Endothelial cell of umbilical vein (primary cell): ENCODE measurements at regions of chr5 and their contacts with region 1.

Region 1: GRCh38 chr5:125484742-125485641 is 738.6 kb upstream of the ZNF608 start:
- DNase-seq: peak; percentile 96
- H3K4me3 ChIP-seq: peak overlapping the region in 1 of 3 experiments; percentile 28
- H3K27ac ChIP-seq: peak overlapping the region; percentile 99
- H3K4me1 ChIP-seq: peaks cover 36% of the 10 kb centered on the region
- H3K27me3 ChIP-seq: no peaks in the 10 kb centered on the region
- CTCF ChIP-seq: no peak
- POLR2A ChIP-seq: peak; percentile 72

Region 2: GRCh38 chr5:123708074-123708806 is 1776.8 kb before region 1 on chr5:
- CTCF ChIA-PET with region 1: no interaction called
- POLR2A ChIA-PET with region 1: no interaction called
- dilution Hi-C with region 1: no loop called
- intact Hi-C with region 1: loop called (anchors 5 kb)
- DNase-seq: peak; percentile 77
- H3K4me3 ChIP-seq: no peak overlapping the region
- H3K27ac ChIP-seq: peak overlapping the region; percentile 64
- H3K4me1 ChIP-seq: peaks cover 23% of the 10 kb centered on the region
- H3K27me3 ChIP-seq: no peaks in the 10 kb centered on the region
- CTCF ChIP-seq: no peak
- POLR2A ChIP-seq: no peak

Region 3: GRCh38 chr5:124902097-124902821 is 582.7 kb before region 1 on chr5:
- CTCF ChIA-PET with region 1: no interaction called
- POLR2A ChIA-PET with region 1: no interaction called
- dilution Hi-C with region 1: no loop called
- intact Hi-C with region 1: loop called (anchors 5 kb)
- DNase-seq: peak; percentile 30
- H3K4me3 ChIP-seq: no peak overlapping the region
- H3K27ac ChIP-seq: no peak overlapping the region
- H3K4me1 ChIP-seq: peaks cover 16% of the 10 kb centered on the region
- H3K27me3 ChIP-seq: no peaks in the 10 kb centered on the region
- CTCF ChIP-seq: no peak
- POLR2A ChIP-seq: no peak

Region 4: GRCh38 chr5:125262782-125263181 is 222.2 kb before region 1 on chr5:
- CTCF ChIA-PET with region 1: no interaction called
- POLR2A ChIA-PET with region 1: no interaction called
- dilution Hi-C with region 1: no loop called
- intact Hi-C with region 1: loop called (anchors 2 kb)
- DNase-seq: peak; percentile 83
- H3K4me3 ChIP-seq: no peak overlapping the region
- H3K27ac ChIP-seq: peak overlapping the region; percentile 81
- H3K4me1 ChIP-seq: peaks cover 22% of the 10 kb centered on the region
- H3K27me3 ChIP-seq: no peaks in the 10 kb centered on the region
- CTCF ChIP-seq: no peak
- POLR2A ChIP-seq: no peak

Region 5: GRCh38 chr5:125326150-125326510 is 158.9 kb before region 1 on chr5:
- CTCF ChIA-PET with region 1: no interaction called
- POLR2A ChIA-PET with region 1: no interaction called
- dilution Hi-C with region 1: no loop called
- intact Hi-C with region 1: no loop called
- DNase-seq: peak; percentile 93
- H3K4me3 ChIP-seq: no peak overlapping the region
- H3K27ac ChIP-seq: no peak overlapping the region
- H3K4me1 ChIP-seq: peaks cover 8% of the 10 kb centered on the region
- H3K27me3 ChIP-seq: no peaks in the 10 kb centered on the region
- CTCF ChIP-seq: no peak
- POLR2A ChIP-seq: no peak

Region 6: GRCh38 chr5:125536582-125536981 is 51.6 kb after region 1 on chr5:
- CTCF ChIA-PET with region 1: no interaction called
- POLR2A ChIA-PET with region 1: no interaction called
- dilution Hi-C with region 1: no loop called
- intact Hi-C with region 1: no loop called
- DNase-seq: no peak
- H3K4me3 ChIP-seq: no peak overlapping the region
- H3K27ac ChIP-seq: no peak overlapping the region
- H3K4me1 ChIP-seq: no peaks in the 10 kb centered on the region
- H3K27me3 ChIP-seq: no peaks in the 10 kb centered on the region
- CTCF ChIP-seq: no peak
- POLR2A ChIP-seq: no peak

Region 7: GRCh38 chr5:125550274-125550673 is 65.3 kb after region 1 on chr5:
- CTCF ChIA-PET with region 1: interaction called, 17 read pairs
- POLR2A ChIA-PET with region 1: no interaction called
- dilution Hi-C with region 1: no loop called
- intact Hi-C with region 1: loop called (anchors 1 kb)
- DNase-seq: peak; percentile 97
- H3K4me3 ChIP-seq: no peak overlapping the region
- H3K27ac ChIP-seq: peak overlapping the region; percentile 69
- H3K4me1 ChIP-seq: peaks cover 30% of the 10 kb centered on the region
- H3K27me3 ChIP-seq: no peaks in the 10 kb centered on the region
- CTCF ChIP-seq: no peak
- POLR2A ChIP-seq: peak; percentile 66

Region 8: GRCh38 chr5:125659316-125660023 is 174.5 kb after region 1 on chr5:
- CTCF ChIA-PET with region 1: no interaction called
- POLR2A ChIA-PET with region 1: no interaction called
- dilution Hi-C with region 1: no loop called
- intact Hi-C with region 1: loop called (anchors 2 kb)
- DNase-seq: peak; percentile 79
- H3K4me3 ChIP-seq: peak overlapping the region in 1 of 3 experiments; percentile 21
- H3K27ac ChIP-seq: peak overlapping the region; percentile 81
- H3K4me1 ChIP-seq: peaks cover 22% of the 10 kb centered on the region
- H3K27me3 ChIP-seq: no peaks in the 10 kb centered on the region
- CTCF ChIP-seq: no peak
- POLR2A ChIP-seq: no peak

Region 9: DNA sequence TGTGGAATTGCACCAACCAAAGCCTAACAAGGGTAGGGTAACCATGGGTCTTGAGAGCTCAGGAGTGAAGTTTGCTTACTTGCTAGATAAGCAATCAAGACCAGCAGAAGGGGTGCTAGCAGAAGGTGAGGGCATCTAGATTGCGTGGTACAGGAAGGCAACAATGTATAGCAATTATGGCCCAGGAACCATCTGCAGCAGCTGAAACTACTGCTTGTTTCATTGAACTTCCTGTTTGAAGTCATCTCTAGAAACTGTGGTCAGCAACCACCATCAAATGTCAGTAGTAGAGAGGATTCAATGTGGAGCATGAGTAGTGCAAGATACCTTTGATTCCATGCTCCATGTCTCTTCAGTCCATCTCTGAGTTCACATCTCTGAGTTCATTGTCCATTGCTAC is 476.2 kb after region 1 on chr5:
- CTCF ChIA-PET with region 1: no interaction called
- POLR2A ChIA-PET with region 1: no interaction called
- dilution Hi-C with region 1: no loop called
- intact Hi-C with region 1: no loop called
- DNase-seq: no peak
- H3K4me3 ChIP-seq: no peak overlapping the region
- H3K27ac ChIP-seq: no peak overlapping the region
- H3K4me1 ChIP-seq: no peaks in the 10 kb centered on the region
- H3K27me3 ChIP-seq: no peaks in the 10 kb centered on the region
- CTCF ChIP-seq: no peak
- POLR2A ChIP-seq: no peak